ENCODE measurements at regions of chr2 and their contacts with region 1.

Region 1: GRCh38 chr2:138787053-138787666 is 7.0 kb upstream of the NXPH2 start:
- DNase-seq: peak; percentile 33
- H3K4me3 ChIP-seq: no peak overlapping the region
- H3K27ac ChIP-seq: no peak overlapping the region
- H3K4me1 ChIP-seq: no peaks in the 10 kb centered on the region
- CTCF ChIP-seq: peak; percentile 86

Region 2: DNA sequence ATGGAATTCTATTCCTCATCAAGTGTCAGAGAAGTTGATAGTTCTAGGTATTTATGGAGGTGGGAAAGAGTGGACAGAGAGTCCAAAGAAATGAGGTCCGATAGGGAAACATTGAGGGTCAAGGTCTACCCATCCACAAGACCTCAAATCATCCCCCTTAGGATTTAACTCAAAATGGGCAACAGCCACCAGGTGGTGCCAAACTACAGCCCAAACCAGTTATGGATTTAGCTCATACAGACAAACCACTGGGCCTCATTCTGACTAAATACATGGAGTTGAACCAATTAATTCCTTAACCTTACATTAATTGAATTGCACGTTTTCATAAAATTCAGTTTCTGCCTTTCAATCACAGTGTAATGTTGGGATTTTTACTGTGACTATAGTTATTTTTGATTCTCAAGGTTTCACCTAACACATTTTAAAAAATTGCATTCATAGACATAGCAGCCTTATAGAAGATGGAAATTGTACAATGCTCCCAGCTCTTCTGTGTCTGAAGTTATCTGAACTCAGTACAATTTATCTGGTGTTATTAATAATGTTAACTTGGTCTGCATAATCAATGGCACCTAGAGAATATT is 921.1 kb before region 1 on chr2:
- CTCF ChIA-PET with region 1: no interaction called
- POLR2A ChIA-PET with region 1: no interaction called
- intact Hi-C with region 1: loop called (anchors 2 kb)
- DNase-seq: peak; percentile 53
- H3K4me3 ChIP-seq: no peak overlapping the region
- H3K27ac ChIP-seq: no peak overlapping the region
- H3K4me1 ChIP-seq: no peaks in the 10 kb centered on the region
- CTCF ChIP-seq: peak; percentile 82

Region 3: GRCh38 chr2:137910641-137911040 is 876.5 kb before region 1 on chr2:
- CTCF ChIA-PET with region 1: no interaction called
- POLR2A ChIA-PET with region 1: no interaction called
- intact Hi-C with region 1: loop called (anchors 2 kb)
- DNase-seq: peak; percentile 11
- H3K4me3 ChIP-seq: no peak overlapping the region
- H3K27ac ChIP-seq: no peak overlapping the region
- H3K4me1 ChIP-seq: no peaks in the 10 kb centered on the region
- CTCF ChIP-seq: peak; percentile 78

Region 4: GRCh38 chr2:138475277-138475776 is 311.8 kb before region 1 on chr2:
- CTCF ChIA-PET with region 1: no interaction called
- POLR2A ChIA-PET with region 1: no interaction called
- intact Hi-C with region 1: loop called (anchors 10 kb)
- DNase-seq: peak; percentile 16
- H3K4me3 ChIP-seq: no peak overlapping the region
- H3K27ac ChIP-seq: no peak overlapping the region
- H3K4me1 ChIP-seq: peaks cover 6% of the 10 kb centered on the region
- CTCF ChIP-seq: no peak

Measured in OCI-LY7 (cell line).